OCI-LY7 (cell line): ENCODE measurements at regions of chr11 and their contacts with region 1.

Region 1: GRCh38 chr11:63813035-63813562 is at the start of gene SPINDOC:
- DNase-seq: peak; percentile 84
- H3K4me3 ChIP-seq: peak within 1 kb of the TSS; percentile 83
- H3K27ac ChIP-seq: peak within 1 kb of the TSS; percentile 58
- H3K4me1 ChIP-seq: peaks cover 18% of the 10 kb centered on the region
- CTCF ChIP-seq: no peak
- total RNA-seq, gene SPINDOC: 57.9 and 71.1 TPM in 2 replicates

Region 2: DNA sequence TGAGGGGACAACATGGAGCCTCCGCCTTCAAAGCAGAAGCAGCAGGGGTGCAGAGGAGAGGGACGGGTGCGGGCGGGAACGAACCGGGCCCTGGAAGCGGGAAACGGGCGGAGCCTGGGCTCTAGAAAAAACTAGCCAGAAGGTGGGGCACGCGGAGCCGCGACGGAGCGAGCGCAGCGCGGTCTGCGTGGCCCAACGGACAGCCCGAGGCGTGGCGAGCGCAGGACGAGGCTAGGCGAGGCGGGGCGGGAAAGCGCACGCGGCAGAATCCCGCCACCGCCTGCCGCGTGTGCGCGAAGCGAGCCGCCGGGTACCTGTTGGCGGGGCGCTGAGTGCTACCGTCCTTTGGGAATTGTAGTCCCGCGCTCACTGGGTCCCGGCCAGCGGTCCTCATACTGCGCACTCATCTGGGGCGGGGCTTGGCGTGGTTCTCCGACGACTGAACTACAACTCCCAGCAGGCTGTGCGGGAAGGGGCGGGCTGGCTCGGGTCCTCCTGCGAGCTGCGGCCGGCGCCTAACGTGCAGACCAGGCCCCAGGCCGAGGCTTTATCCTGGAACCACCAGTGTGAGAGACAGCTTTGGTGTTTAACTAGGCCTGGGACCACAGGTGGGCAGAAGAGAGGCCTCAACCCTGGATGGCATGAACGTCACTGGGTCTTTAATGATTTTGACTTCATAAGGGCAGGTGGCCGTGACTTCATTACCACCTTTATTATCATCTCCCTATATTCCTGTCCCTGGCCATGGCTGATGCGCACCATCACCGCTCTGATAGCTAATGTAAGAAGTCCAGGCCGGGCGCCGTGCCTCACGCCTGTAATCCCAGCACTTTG is 141.6 kb before region 1 on chr11 and contains the start of gene ATL3:
- CTCF ChIA-PET with region 1: no interaction called
- POLR2A ChIA-PET with region 1: no interaction called
- intact Hi-C with region 1: loop called (anchors 5 kb)
- DNase-seq: peak; percentile 98
- H3K4me3 ChIP-seq: peak within 1 kb of the TSS; percentile 76
- H3K27ac ChIP-seq: peak within 1 kb of the TSS; percentile 48
- H3K4me1 ChIP-seq: peaks cover 27% of the 10 kb centered on the region
- CTCF ChIP-seq: no peak
- total RNA-seq, gene ATL3: 15.7 and 23.2 TPM in 2 replicates

Region 3: GRCh38 chr11:63768237-63769043 is 44.7 kb before region 1 on chr11 and contains the start of gene ZFTA:
- CTCF ChIA-PET with region 1: no interaction called
- POLR2A ChIA-PET with region 1: no interaction called
- intact Hi-C with region 1: loop called (anchors 5 kb)
- DNase-seq: peak; percentile 84
- H3K4me3 ChIP-seq: peak within 1 kb of the TSS; percentile 91
- H3K27ac ChIP-seq: peak within 1 kb of the TSS; percentile 52
- H3K4me1 ChIP-seq: peaks cover 20% of the 10 kb centered on the region
- CTCF ChIP-seq: peak; percentile 52
- total RNA-seq, gene ZFTA: 6.8 and 10.3 TPM in 2 replicates